PC-3 (cell line): ENCODE measurements at regions of chr17 and their contacts with region 1.

Region 1: DNA sequence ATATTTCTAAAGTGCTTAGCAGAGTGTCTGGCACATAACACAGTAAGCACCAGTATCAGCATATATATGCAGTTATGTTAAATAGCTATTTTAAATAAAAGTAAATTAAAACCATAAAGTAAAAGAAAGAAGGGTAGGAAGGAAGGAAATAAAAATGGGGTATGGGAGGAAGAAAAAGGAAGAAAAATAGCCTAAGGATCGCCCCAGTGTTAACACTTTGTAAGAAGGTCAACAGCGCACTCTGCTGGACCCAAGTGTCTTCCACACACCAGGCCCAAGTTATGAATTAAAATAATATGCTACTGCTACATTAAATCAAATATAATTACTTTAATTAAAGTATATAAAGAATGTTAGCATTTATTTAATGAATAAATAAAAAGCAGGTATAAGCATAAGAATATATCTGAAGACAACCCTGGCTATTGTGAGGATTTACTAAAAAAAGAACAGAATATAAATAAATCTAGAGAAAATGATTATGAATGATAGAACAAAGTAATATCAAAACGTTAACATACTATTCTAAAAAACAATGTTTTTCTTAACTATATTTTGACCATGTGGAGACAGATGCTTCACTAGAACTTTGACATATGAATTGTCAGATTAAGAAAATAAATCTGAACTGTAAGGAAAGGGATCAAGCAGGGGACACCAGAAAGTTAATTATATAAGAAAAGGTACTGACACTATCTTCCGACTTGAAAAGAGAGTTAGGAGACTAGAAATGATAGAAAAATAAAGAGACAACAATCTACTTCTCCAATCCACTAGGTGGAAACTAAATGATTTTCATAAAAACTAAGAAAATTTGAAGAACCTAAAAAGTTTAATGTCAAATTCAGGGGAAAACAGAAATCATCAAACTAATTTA is 25.9 kb downstream of the BRIP1 start:
- DNase-seq: peak; percentile 85
- ATAC-seq: peak; percentile 63
- H3K4me3 ChIP-seq: no peak overlapping the region
- H3K27ac ChIP-seq: no peak overlapping the region
- H3K4me1 ChIP-seq: peaks cover 30% of the 10 kb centered on the region
- H3K27me3 ChIP-seq: no peaks in the 10 kb centered on the region
- CTCF ChIP-seq: peak; percentile 82

Region 2: GRCh38 chr17:61583242-61583641 is 254.2 kb before region 1 on chr17:
- CTCF ChIA-PET with region 1: interaction called, 6 read pairs
- POLR2A ChIA-PET with region 1: no interaction called
- intact Hi-C with region 1: loop called (anchors 1 kb)
- DNase-seq: peak; percentile 86
- ATAC-seq: peak; percentile 66
- H3K4me3 ChIP-seq: no peak overlapping the region
- H3K27ac ChIP-seq: no peak overlapping the region
- H3K4me1 ChIP-seq: peaks cover 30% of the 10 kb centered on the region
- H3K27me3 ChIP-seq: no peaks in the 10 kb centered on the region
- CTCF ChIP-seq: peak; percentile 83

Region 3: GRCh38 chr17:61672140-61672539 is 165.3 kb before region 1 on chr17:
- CTCF ChIA-PET with region 1: no interaction called
- POLR2A ChIA-PET with region 1: interaction called, 11 read pairs
- intact Hi-C with region 1: no loop called
- DNase-seq: no peak
- ATAC-seq: no peak
- H3K4me3 ChIP-seq: no peak overlapping the region
- H3K27ac ChIP-seq: no peak overlapping the region
- H3K4me1 ChIP-seq: no peaks in the 10 kb centered on the region
- H3K27me3 ChIP-seq: no peaks in the 10 kb centered on the region
- CTCF ChIP-seq: no peak

Region 4: DNA sequence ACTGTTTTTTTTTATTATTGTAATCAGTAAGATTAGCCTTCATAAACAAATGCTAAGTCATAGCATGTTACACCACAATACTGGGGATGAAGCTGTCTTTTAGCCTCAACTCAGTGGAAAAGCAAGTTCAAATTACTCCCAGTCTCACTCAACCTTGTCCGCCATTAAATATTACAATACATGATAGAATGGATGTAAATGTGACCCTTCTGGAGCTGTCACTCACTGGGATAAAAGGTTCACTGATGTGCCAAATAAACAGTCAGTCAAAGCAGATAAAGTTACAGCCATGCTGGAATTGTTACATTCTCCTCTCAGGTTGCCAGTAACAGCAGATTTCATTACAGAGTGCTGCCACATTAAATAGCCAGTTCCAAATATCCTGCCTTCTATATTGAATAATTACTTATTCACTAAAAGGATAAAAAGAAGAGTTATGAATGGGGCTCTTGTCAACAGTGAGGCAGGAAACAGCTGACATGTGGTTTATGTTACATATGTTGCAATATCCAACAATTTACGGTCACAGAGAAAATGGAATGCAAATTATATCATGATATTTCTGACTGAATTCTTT is 27.5 kb before region 1 on chr17:
- CTCF ChIA-PET with region 1: no interaction called
- POLR2A ChIA-PET with region 1: interaction called, 3 read pairs
- intact Hi-C with region 1: loop called (anchors 2 kb)
- DNase-seq: peak; percentile 73
- ATAC-seq: peak; percentile 88
- H3K4me3 ChIP-seq: no peak overlapping the region
- H3K27ac ChIP-seq: no peak overlapping the region
- H3K4me1 ChIP-seq: peaks cover 29% of the 10 kb centered on the region
- H3K27me3 ChIP-seq: no peaks in the 10 kb centered on the region
- CTCF ChIP-seq: no peak